A673 (cell line): ENCODE measurements at regions of chr20 and their contacts with region 1.

Region 1: GRCh38 chr20:58179432-58180099 is 48.9 kb downstream of the ANKRD60 start:
- DNase-seq: peak; percentile 66
- H3K4me3 ChIP-seq: peak overlapping the region; percentile 18
- H3K27ac ChIP-seq: no peak overlapping the region
- H3K4me1 ChIP-seq: no peaks in the 10 kb centered on the region
- H3K27me3 ChIP-seq: no peaks in the 10 kb centered on the region
- CTCF ChIP-seq: peak; percentile 87

Region 2: GRCh38 chr20:57622579-57623377 is 556.8 kb before region 1 on chr20:
- CTCF ChIA-PET with region 1: interaction called, 9 read pairs
- POLR2A ChIA-PET with region 1: no interaction called
- intact Hi-C with region 1: loop called (anchors 10 kb)
- DNase-seq: peak; percentile 50
- H3K4me3 ChIP-seq: no peak overlapping the region
- H3K27ac ChIP-seq: no peak overlapping the region
- H3K4me1 ChIP-seq: no peaks in the 10 kb centered on the region
- H3K27me3 ChIP-seq: no peaks in the 10 kb centered on the region
- CTCF ChIP-seq: peak; percentile 68

Region 3: DNA sequence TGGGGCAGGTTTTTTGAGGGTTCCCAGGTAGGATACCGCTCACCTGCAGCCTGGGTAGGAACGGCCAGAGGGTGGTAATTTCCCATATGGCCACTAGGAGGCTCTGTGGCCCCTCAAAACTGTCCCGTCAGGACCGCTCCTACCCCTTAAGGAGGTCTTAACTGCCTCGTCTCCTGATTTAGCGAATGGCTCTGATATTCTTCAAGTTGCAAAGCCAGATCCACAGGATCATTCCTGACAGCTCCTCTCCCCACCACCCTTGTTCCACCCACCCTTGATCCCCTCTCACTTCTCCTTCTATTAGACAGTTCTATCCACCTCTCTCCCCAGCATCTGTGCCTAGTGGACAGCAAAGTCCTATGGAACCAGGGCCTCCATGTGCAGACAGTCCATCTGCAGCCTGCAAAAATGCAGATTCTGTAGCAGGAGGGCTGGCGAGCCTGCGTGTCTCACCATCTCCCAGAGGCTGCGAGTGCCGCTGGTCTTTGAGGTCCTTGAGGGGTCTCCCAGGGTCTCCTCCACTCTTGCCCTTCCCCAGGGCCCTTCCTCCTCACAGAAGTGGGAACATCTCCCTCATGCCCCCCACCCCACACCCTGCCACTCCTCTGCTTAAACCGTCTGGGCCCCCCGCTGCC is 525.1 kb before region 1 on chr20:
- CTCF ChIA-PET with region 1: no interaction called
- POLR2A ChIA-PET with region 1: no interaction called
- intact Hi-C with region 1: loop called (anchors 1 kb)
- DNase-seq: peak; percentile 65
- H3K4me3 ChIP-seq: no peak overlapping the region
- H3K27ac ChIP-seq: no peak overlapping the region
- H3K4me1 ChIP-seq: peaks cover 6% of the 10 kb centered on the region
- H3K27me3 ChIP-seq: no peaks in the 10 kb centered on the region
- CTCF ChIP-seq: peak; percentile 88

Region 4: GRCh38 chr20:57810511-57811373 is 368.8 kb before region 1 on chr20:
- CTCF ChIA-PET with region 1: no interaction called
- POLR2A ChIA-PET with region 1: no interaction called
- intact Hi-C with region 1: no loop called
- DNase-seq: no peak
- H3K4me3 ChIP-seq: no peak overlapping the region
- H3K27ac ChIP-seq: no peak overlapping the region
- H3K4me1 ChIP-seq: no peaks in the 10 kb centered on the region
- H3K27me3 ChIP-seq: no peaks in the 10 kb centered on the region
- CTCF ChIP-seq: no peak

Region 5: DNA sequence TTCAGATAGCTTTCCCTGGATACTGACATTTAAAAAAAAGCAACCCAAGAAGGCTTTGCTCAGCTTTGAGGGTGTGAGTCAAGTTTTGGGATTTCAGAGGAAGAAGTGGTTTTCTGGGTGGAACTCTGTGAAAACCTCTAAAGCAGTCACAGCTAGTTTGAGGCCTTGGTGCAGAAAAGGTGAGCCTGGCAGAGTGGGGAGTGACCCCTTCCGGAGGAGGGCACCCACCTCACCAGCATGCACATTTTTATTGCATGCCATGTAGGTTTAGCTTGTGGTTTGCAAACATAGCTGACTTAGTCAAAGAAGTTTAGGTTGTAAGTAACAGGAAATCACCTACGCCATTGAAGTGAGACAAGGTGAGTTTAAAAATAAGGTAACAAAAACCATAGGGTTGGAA is 322.9 kb before region 1 on chr20:
- CTCF ChIA-PET with region 1: no interaction called
- POLR2A ChIA-PET with region 1: no interaction called
- intact Hi-C with region 1: no loop called
- DNase-seq: no peak
- H3K4me3 ChIP-seq: no peak overlapping the region
- H3K27ac ChIP-seq: no peak overlapping the region
- H3K4me1 ChIP-seq: no peaks in the 10 kb centered on the region
- H3K27me3 ChIP-seq: no peaks in the 10 kb centered on the region
- CTCF ChIP-seq: no peak

Region 6: DNA sequence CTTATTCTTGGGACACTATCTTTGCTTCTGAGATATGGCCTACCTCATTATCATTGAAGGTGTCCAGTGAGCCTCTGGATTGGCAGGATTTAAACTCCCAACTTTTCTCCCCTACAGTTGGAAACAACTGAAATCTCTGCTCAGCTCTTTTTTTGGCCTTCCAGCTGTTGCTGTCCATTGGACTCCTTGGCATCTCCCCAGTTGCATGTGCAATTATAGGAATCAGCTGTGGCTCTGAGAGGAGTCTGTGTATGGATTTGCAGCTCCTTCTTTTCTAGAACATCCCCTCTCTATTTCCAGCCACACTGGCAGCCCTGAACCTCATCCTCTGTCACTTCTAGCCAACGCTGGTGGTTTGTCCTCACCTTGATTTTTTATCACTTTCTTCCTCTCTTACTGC is 151.1 kb after region 1 on chr20:
- CTCF ChIA-PET with region 1: no interaction called
- POLR2A ChIA-PET with region 1: no interaction called
- intact Hi-C with region 1: no loop called
- DNase-seq: no peak
- H3K4me3 ChIP-seq: no peak overlapping the region
- H3K27ac ChIP-seq: no peak overlapping the region
- H3K4me1 ChIP-seq: no peaks in the 10 kb centered on the region
- H3K27me3 ChIP-seq: no peaks in the 10 kb centered on the region
- CTCF ChIP-seq: no peak